Activated CD4-positive, alpha-beta T cell treated with anti-CD3 and anti-CD28 coated beads for 36 hours (primary cell): ENCODE measurements at regions of chr7 and their contacts with region 1.

Region 1: DNA sequence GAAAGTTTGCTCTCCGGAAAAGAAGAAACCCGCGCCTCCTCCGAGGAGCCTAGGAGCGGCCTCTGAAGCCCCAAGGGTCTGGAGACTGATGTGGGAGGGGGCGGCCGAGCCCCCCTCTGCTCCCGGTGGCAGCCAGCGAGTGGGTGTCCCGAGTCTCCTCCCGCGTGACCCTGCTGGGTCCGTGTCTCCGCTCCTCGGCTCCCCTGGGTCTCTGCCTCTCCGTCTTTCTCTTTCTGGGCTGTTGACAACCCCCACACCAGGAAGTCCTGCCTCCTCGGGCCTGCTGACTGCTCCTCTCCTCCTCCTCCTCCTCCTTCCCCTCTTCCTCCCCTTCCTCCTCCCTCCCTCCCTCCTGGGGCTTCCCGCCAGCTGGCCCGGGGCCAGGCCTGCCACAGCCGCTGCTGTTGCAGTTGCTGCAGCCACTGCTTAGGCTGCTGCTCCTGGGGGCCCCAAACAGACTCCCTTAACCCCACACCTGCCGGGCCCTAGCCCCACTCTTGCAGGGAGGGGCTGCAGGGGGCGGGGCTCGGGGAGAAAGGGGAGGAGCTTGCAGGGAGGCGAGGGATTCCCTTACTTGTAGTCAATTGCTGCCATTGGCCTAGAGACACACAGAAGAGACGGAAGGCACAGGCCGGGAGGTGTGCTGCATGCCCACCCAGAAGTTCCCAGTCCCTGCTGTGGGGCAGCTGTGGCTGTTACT is at the start of gene TSC22D4:
- DNase-seq: peak; percentile 96
- ATAC-seq: peak; percentile 79
- H3K4me3 Mint-ChIP-seq: peak within 1 kb of the TSS; percentile 92
- H3K27ac Mint-ChIP-seq: peak within 1 kb of the TSS; percentile 94
- H3K4me1 Mint-ChIP-seq: peaks cover 41% of the 10 kb centered on the region
- H3K27me3 Mint-ChIP-seq: no peaks in the 10 kb centered on the region
- total RNA-seq, gene TSC22D4: 78.5 to 85.7 TPM

Region 2: GRCh38 chr7:100101016-100101862 is 377.9 kb before region 1 on chr7 and contains the starts of genes AP4M1 and MCM7:
- CTCF ChIA-PET with region 1: no interaction called
- POLR2A ChIA-PET with region 1: no interaction called
- intact Hi-C with region 1: loop called in 1 of 2 experiments (anchors 2 kb)
- DNase-seq: peak; percentile 99
- ATAC-seq: peak; percentile 91
- H3K4me3 Mint-ChIP-seq: peak within 1 kb of the TSS; percentile 90
- H3K27ac Mint-ChIP-seq: peak within 1 kb of the TSS; percentile 94
- H3K4me1 Mint-ChIP-seq: peaks cover 41% of the 10 kb centered on the region
- H3K27me3 Mint-ChIP-seq: no peaks in the 10 kb centered on the region
- total RNA-seq, gene AP4M1: 8.8 to 10.4 TPM
- total RNA-seq, gene MCM7: 411 to 429 TPM

Region 3: GRCh38 chr7:100435401-100436304 is 43.5 kb before region 1 on chr7:
- CTCF ChIA-PET with region 1: interaction called, 5 read pairs
- POLR2A ChIA-PET with region 1: no interaction called
- intact Hi-C with region 1: loop called in 1 of 2 experiments (anchors 1 kb)
- DNase-seq: peak; percentile 70
- ATAC-seq: peak; percentile 30
- H3K4me3 Mint-ChIP-seq: peak overlapping the region; percentile 89
- H3K27ac Mint-ChIP-seq: peak overlapping the region; percentile 88
- H3K4me1 Mint-ChIP-seq: peaks cover 43% of the 10 kb centered on the region
- H3K27me3 Mint-ChIP-seq: no peaks in the 10 kb centered on the region

Region 4: DNA sequence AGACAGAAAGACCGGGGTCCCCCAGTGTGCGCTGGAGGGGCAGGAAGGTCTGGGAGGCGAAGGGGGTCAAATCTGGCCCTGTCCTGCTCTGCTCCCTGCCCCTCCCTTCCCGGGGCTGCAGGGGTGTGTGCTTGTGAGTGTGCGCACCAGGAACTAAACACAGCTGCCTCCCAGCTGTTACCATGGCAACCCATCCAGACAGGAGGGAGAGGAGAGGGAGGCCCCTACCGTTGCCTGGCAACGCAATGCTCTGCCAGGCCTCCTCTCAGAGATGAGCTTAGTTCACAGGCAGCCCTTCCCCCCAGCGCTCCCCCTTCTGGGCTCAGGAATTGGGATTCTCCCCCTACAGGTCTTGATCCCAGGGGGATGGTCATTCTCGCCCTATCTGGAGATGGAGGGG is 10.7 kb after region 1 on chr7:
- CTCF ChIA-PET with region 1: interaction called, 12 read pairs
- POLR2A ChIA-PET with region 1: no interaction called
- intact Hi-C with region 1: no loop called
- DNase-seq: peak; percentile 73
- ATAC-seq: peak; percentile 33
- H3K4me3 Mint-ChIP-seq: no peak overlapping the region
- H3K27ac Mint-ChIP-seq: no peak overlapping the region
- H3K4me1 Mint-ChIP-seq: peaks cover 11% of the 10 kb centered on the region
- H3K27me3 Mint-ChIP-seq: no peaks in the 10 kb centered on the region

Region 5: GRCh38 chr7:100538654-100539435 is 59.7 kb after region 1 on chr7 and contains the start of gene AGFG2:
- CTCF ChIA-PET with region 1: interaction called, 10 read pairs
- POLR2A ChIA-PET with region 1: no interaction called
- intact Hi-C with region 1: loop called in 1 of 2 experiments (anchors 1 kb)
- DNase-seq: peak; percentile 100
- ATAC-seq: peak; percentile 92
- H3K4me3 Mint-ChIP-seq: peak within 1 kb of the TSS; percentile 98
- H3K27ac Mint-ChIP-seq: peak within 1 kb of the TSS; percentile 95
- H3K4me1 Mint-ChIP-seq: peaks cover 42% of the 10 kb centered on the region
- H3K27me3 Mint-ChIP-seq: no peaks in the 10 kb centered on the region
- total RNA-seq, gene AGFG2: 49.3 to 49.4 TPM

Region 6: GRCh38 chr7:100545360-100546128 is 66.4 kb after region 1 on chr7:
- CTCF ChIA-PET with region 1: interaction called, 10 read pairs
- POLR2A ChIA-PET with region 1: no interaction called
- intact Hi-C with region 1: loop called (anchors 1 kb)
- DNase-seq: peak; percentile 82
- ATAC-seq: peak; percentile 78
- H3K4me3 Mint-ChIP-seq: peak overlapping the region; percentile 98
- H3K27ac Mint-ChIP-seq: peak overlapping the region; percentile 99
- H3K4me1 Mint-ChIP-seq: peaks cover 96% of the 10 kb centered on the region
- H3K27me3 Mint-ChIP-seq: no peaks in the 10 kb centered on the region

Region 7: GRCh38 chr7:100563809-100564400 is 84.8 kb after region 1 on chr7:
- CTCF ChIA-PET with region 1: interaction called, 15 read pairs
- POLR2A ChIA-PET with region 1: no interaction called
- intact Hi-C with region 1: loop called (anchors 1 to 2 kb)
- DNase-seq: peak; percentile 91
- ATAC-seq: peak; percentile 69
- H3K4me3 Mint-ChIP-seq: no peak overlapping the region
- H3K27ac Mint-ChIP-seq: no peak overlapping the region
- H3K4me1 Mint-ChIP-seq: peaks cover 24% of the 10 kb centered on the region
- H3K27me3 Mint-ChIP-seq: no peaks in the 10 kb centered on the region

Region 8: GRCh38 chr7:100726996-100727761 is 248.1 kb after region 1 on chr7:
- CTCF ChIA-PET with region 1: no interaction called
- POLR2A ChIA-PET with region 1: no interaction called
- intact Hi-C with region 1: no loop called
- DNase-seq: no peak
- ATAC-seq: no peak
- H3K4me3 Mint-ChIP-seq: no peak overlapping the region
- H3K27ac Mint-ChIP-seq: no peak overlapping the region
- H3K4me1 Mint-ChIP-seq: peaks cover 3% of the 10 kb centered on the region
- H3K27me3 Mint-ChIP-seq: peaks cover 13% of the 10 kb centered on the region